OCI-LY7 (cell line): ENCODE measurements at regions of chr4 and their contacts with region 1.

Region 1: DNA sequence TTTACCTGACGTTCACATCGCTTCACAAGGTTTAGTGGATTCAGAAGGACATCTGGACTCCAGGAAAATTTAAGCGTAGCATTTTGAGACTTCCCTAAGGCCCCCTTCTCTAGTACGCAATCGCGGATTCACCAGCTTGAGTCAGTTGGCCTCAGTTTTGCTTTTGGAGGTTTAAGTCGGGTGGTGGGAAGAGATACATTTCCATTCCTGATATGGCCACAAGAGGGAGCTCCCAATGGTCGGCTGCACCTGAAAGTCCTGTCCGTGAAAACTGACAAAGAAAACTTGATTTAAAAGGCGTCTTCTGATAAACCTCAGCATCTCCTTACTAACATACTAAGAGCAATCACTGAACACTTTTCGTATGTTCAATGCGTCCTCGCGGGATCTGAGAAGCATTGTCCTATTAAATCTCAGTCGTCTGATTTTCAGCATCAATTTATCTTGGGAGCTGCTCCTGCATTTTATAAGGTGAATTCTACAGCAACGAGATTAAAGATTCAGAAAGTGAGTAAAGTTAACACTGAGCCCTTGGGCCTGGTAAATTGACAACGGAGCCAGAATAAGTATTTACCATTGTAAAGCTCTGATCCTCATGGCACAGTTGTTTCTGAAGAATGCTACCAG is 50.6 kb downstream of the LGI2 start:
- DNase-seq: peak; percentile 54
- H3K4me3 ChIP-seq: no peak overlapping the region
- H3K27ac ChIP-seq: no peak overlapping the region
- H3K4me1 ChIP-seq: no peaks in the 10 kb centered on the region
- CTCF ChIP-seq: peak; percentile 96

Region 2: GRCh38 chr4:24488399-24489164 is 491.6 kb before region 1 on chr4:
- CTCF ChIA-PET with region 1: no interaction called
- POLR2A ChIA-PET with region 1: no interaction called
- intact Hi-C with region 1: loop called (anchors 10 kb)
- DNase-seq: peak; percentile 62
- H3K4me3 ChIP-seq: no peak overlapping the region
- H3K27ac ChIP-seq: no peak overlapping the region
- H3K4me1 ChIP-seq: no peaks in the 10 kb centered on the region
- CTCF ChIP-seq: peak; percentile 95

Region 3: GRCh38 chr4:25144870-25145481 is 164.8 kb after region 1 on chr4:
- CTCF ChIA-PET with region 1: no interaction called
- POLR2A ChIA-PET with region 1: no interaction called
- intact Hi-C with region 1: loop called (anchors 10 kb)
- DNase-seq: peak; percentile 36
- H3K4me3 ChIP-seq: no peak overlapping the region
- H3K27ac ChIP-seq: no peak overlapping the region
- H3K4me1 ChIP-seq: no peaks in the 10 kb centered on the region
- CTCF ChIP-seq: peak; percentile 92

Region 4: DNA sequence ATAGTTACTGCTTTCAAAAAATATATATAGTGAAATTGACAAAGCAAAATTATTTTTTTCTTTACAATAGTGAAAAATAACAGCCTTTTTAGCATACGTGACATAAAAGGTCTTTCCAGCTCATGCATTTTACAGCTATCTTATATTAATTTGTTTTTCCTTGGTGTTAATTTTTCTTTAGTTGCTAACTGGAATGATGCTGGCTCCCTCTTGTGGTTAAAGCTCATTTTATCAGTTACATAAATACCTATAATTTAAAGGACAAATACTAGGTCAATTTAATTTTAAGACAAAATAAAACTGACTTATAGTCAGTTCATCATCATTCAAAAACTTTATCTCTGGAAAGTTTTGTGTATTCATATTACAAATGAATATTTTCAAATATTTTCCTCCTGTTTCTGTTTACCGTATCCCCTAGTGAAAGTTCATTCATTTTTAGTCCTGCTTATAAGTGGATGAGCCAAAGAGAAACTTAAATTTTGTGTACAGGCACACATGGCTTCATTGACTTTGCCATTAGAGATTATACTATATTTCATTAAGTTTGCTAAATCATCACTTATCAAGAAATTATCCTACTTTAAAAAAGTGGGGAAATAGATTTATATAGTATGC is 386.9 kb after region 1 on chr4:
- CTCF ChIA-PET with region 1: interaction called, 4 read pairs
- POLR2A ChIA-PET with region 1: no interaction called
- intact Hi-C with region 1: loop called (anchors 2 kb)
- DNase-seq: peak; percentile 58
- H3K4me3 ChIP-seq: no peak overlapping the region
- H3K27ac ChIP-seq: no peak overlapping the region
- H3K4me1 ChIP-seq: no peaks in the 10 kb centered on the region
- CTCF ChIP-seq: peak; percentile 97